ENCODE measurements at regions of chr3 and their contacts with region 1.

Region 1: GRCh38 chr3:30751610-30752299 is 142.7 kb downstream of the GADL1 start:
- DNase-seq: peak; percentile 62
- ATAC-seq: peak; percentile 60
- H3K4me3 ChIP-seq: no peak overlapping the region
- H3K27ac ChIP-seq: no peak overlapping the region
- H3K4me1 ChIP-seq: peaks cover 7% of the 10 kb centered on the region
- H3K27me3 ChIP-seq: no peaks in the 10 kb centered on the region
- CTCF ChIP-seq: peak; percentile 65
- POLR2A ChIP-seq: no peak
- RAD21 ChIP-seq: peak; percentile 70

Region 2: DNA sequence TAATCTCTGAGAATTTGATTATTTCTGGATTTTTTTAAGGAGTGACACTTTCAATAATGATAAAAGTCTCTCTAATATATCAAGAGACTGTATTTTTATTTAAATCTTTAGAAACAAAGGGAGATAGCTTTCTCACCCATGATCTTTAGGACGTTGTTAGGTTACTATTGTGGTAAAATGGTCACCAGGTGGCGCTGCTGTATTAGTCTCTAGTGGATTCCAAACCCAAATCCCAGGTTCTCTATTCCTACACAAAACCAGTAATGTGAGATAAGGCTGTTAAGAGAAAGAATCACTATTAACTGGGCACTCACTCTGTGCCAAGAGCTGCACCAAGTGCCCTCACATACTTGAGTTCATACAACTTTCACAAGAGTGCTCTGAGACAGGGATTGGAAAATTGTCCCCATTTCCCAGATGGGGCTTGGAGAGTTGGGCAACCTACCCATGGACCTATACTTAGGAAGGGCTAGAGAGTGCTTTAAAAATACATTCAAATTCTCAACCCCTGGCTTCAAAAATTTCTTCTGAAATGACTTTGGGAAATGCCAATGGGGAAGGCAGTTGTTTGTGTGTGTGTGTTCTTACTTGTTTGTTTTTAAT is 738.7 kb before region 1 on chr3:
- CTCF ChIA-PET with region 1: interaction called, 3 read pairs
- POLR2A ChIA-PET with region 1: no interaction called
- dilution Hi-C with region 1: no loop called
- in situ Hi-C with region 1: no loop called
- intact Hi-C with region 1: loop called (anchors 1 kb)
- DNase-seq: peak; percentile 70
- ATAC-seq: peak; percentile 72
- H3K4me3 ChIP-seq: no peak overlapping the region
- H3K27ac ChIP-seq: no peak overlapping the region
- H3K4me1 ChIP-seq: no peaks in the 10 kb centered on the region
- H3K27me3 ChIP-seq: no peaks in the 10 kb centered on the region
- CTCF ChIP-seq: peak; percentile 65
- POLR2A ChIP-seq: no peak
- RAD21 ChIP-seq: peak; percentile 64

Region 3: DNA sequence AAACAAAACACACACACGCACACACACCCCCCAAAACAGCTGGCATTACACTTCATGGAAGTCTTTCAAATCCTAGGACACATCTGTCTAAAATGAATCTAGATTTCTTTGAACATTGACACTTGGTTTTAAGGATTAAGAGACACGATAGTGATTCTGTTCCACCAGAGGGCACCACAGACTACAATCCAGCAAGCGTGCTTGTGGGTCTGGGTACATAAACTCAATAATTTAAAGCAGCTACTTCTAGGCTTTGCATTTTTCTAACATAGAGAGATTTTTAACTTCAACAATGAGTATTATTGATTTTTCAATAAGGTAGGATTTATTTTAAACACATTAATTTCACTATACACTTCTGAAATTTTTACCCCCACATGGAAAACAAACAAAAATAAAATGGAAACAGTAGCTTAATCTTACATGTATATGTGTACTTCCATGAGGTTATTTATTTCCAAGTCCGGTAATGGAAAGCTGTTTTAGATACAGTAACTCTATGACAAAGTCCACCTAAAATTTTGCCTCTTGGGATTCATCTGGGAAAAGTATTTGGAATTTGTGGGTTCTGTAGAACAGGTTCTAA is 709.4 kb before region 1 on chr3:
- CTCF ChIA-PET with region 1: interaction called, 12 read pairs
- POLR2A ChIA-PET with region 1: no interaction called
- dilution Hi-C with region 1: no loop called
- in situ Hi-C with region 1: loop called (anchors 5 kb)
- intact Hi-C with region 1: loop called (anchors 1 kb)
- DNase-seq: peak; percentile 79
- ATAC-seq: peak; percentile 81
- H3K4me3 ChIP-seq: no peak overlapping the region
- H3K27ac ChIP-seq: no peak overlapping the region
- H3K4me1 ChIP-seq: no peaks in the 10 kb centered on the region
- H3K27me3 ChIP-seq: no peaks in the 10 kb centered on the region
- CTCF ChIP-seq: peak; percentile 88
- POLR2A ChIP-seq: no peak
- RAD21 ChIP-seq: peak; percentile 92

Region 4: GRCh38 chr3:30112902-30113484 is 638.8 kb before region 1 on chr3:
- CTCF ChIA-PET with region 1: interaction called, 3 read pairs
- POLR2A ChIA-PET with region 1: no interaction called
- dilution Hi-C with region 1: no loop called
- in situ Hi-C with region 1: no loop called
- intact Hi-C with region 1: loop called (anchors 2 kb)
- DNase-seq: peak; percentile 59
- ATAC-seq: peak; percentile 78
- H3K4me3 ChIP-seq: no peak overlapping the region
- H3K27ac ChIP-seq: no peak overlapping the region
- H3K4me1 ChIP-seq: no peaks in the 10 kb centered on the region
- H3K27me3 ChIP-seq: no peaks in the 10 kb centered on the region; the same call in none of the 2 replicates
- CTCF ChIP-seq: peak; percentile 72
- POLR2A ChIP-seq: no peak
- RAD21 ChIP-seq: peak; percentile 82

Region 5: DNA sequence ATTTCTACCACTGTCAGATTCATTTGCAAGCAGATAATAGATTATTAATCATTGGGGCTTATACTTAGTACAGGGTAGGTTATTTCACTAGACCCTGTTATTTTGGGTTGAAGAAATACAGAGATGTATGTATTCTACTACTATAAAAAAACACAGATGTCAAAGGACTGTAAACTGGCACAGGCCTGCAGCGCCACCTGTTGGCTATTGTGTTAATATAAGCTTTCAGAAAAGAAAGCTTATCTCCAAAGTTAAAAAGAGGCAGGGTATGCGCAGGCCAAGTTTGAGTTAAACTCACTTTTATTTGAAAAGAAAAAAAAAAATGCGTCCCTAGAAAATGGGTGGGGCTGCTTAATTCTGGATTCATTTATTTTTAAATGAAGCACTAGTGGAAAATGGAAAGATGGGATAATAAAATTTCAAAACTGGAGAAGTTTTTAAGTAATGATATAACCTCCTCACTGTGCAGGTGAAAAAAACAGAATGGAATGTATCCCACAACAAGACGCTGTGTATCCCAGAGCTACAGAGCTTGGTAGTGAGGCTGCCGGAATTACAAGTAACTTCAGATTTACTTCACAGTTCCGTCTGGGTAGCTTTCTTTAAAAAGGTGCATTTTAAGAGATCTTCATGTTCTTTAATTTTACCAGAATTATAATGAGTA is 552.5 kb before region 1 on chr3:
- CTCF ChIA-PET with region 1: interaction called, 4 read pairs
- POLR2A ChIA-PET with region 1: no interaction called
- dilution Hi-C with region 1: no loop called
- in situ Hi-C with region 1: no loop called
- intact Hi-C with region 1: loop called (anchors 5 kb)
- DNase-seq: peak; percentile 55
- ATAC-seq: peak; percentile 40; the same call in 1 of the 2 replicates
- H3K4me3 ChIP-seq: no peak overlapping the region
- H3K27ac ChIP-seq: no peak overlapping the region
- H3K4me1 ChIP-seq: peaks cover 6% of the 10 kb centered on the region
- H3K27me3 ChIP-seq: no peaks in the 10 kb centered on the region
- CTCF ChIP-seq: peak; percentile 84
- POLR2A ChIP-seq: no peak
- RAD21 ChIP-seq: peak; percentile 83

Region 6: DNA sequence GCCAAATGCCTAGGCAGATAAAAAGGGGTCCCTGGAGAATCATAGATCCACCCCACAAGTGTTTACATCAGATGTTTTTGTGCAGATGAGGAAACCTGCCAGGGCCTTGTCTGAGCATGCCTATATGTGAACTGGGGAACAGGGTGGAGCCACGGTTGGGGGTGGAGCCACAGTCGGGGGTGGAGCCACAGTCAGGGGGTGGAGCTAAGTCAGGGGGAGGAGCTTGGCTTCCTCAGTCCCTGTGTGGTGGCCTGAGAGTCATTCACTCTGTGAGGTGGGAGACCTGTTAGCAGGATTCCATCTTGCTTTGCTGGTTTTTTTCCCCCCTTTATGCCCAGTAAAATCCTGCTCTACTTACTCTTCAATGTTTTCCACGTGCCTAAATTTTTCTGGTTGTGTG is 203.2 kb before region 1 on chr3:
- CTCF ChIA-PET with region 1: no interaction called
- POLR2A ChIA-PET with region 1: no interaction called
- dilution Hi-C with region 1: no loop called
- in situ Hi-C with region 1: no loop called
- intact Hi-C with region 1: loop called (anchors 10 kb)
- DNase-seq: no peak
- ATAC-seq: no peak
- H3K4me3 ChIP-seq: no peak overlapping the region
- H3K27ac ChIP-seq: no peak overlapping the region
- H3K4me1 ChIP-seq: peaks cover 2% of the 10 kb centered on the region; the same call in 1 of the 2 replicates
- H3K27me3 ChIP-seq: no peaks in the 10 kb centered on the region
- CTCF ChIP-seq: no peak
- POLR2A ChIP-seq: no peak
- RAD21 ChIP-seq: no peak

Region 7: DNA sequence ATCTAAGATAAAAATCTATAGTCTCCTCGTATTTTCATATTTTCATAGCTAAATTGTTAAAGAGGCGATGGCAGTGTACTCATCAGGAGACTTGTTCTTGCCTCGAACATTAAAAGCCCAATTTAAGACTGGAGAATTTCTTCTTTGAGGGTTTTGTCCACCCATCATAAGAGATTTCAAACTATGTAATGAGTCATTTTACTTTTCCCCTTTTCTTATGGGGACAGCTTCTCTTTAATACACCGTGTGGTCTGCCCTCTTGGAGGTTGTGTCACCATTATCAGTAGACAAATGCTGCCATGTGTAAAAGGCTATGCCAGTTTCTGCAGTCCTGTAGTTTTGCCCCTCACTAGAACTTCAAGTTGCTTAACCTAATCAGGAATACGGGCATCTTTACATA is 128.4 kb before region 1 on chr3:
- CTCF ChIA-PET with region 1: no interaction called
- POLR2A ChIA-PET with region 1: no interaction called
- dilution Hi-C with region 1: no loop called
- in situ Hi-C with region 1: no loop called
- intact Hi-C with region 1: no loop called
- DNase-seq: peak; percentile 55
- ATAC-seq: no peak
- H3K4me3 ChIP-seq: no peak overlapping the region
- H3K27ac ChIP-seq: no peak overlapping the region
- H3K4me1 ChIP-seq: peaks cover 13% of the 10 kb centered on the region
- H3K27me3 ChIP-seq: no peaks in the 10 kb centered on the region
- CTCF ChIP-seq: no peak
- POLR2A ChIP-seq: no peak
- RAD21 ChIP-seq: no peak

Measured in IMR-90 (cell line).